ENCODE measurements at regions of chr11 and their contacts with region 1.

Region 1: DNA sequence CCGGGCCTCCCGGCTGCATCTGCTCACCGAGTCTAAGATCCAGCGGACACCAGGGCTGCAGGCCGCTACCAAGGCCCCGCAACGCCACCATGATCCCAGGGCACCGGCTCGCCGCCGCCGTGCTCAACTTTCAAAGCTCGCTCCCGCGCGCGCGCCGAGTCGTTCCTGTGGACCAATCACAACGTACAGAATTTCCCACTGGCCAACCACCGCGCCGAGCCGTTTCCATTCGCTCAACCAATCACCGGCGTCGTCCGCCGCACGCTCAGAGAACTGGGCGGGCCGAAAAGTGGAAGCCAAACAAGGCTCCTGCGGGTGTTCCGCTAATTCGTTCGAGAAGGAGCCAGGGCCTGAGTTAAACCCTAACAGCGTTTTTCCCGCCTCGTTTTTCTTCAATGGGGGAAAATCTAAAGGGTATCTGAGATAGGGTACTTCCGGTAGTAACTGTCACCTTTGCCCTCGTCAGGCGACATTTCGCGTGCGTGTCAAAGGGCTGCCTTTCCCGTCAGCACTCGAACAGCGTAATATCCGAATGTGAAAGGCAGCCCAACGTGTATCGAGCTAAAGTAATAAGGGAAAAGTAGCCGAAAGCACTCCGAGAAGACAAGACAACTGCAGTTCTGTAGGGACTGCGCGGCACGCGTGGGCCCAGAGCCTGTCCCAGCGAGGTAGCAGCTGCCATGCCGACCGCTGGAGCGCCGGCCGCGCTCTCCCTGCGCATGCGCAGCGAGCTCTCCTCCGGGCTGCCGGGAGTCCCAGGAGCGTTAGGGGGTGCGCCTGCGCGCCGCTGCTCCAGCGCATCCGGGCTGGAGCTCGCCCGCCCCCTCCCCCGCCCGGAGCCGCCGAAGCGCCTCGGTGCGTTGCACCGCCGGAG is at the starts of genes NCAPD3 and VPS26B:
- DNase-seq: peak; percentile 95
- ATAC-seq: peak; percentile 82
- H3K4me3 Mint-ChIP-seq: peak within 1 kb of the TSS; percentile 99
- H3K27ac Mint-ChIP-seq: peak within 1 kb of the TSS; percentile 95
- H3K4me1 Mint-ChIP-seq: peaks cover 57% of the 10 kb centered on the region
- H3K27me3 Mint-ChIP-seq: no peaks in the 10 kb centered on the region
- total RNA-seq, gene NCAPD3: 114 to 115 TPM
- total RNA-seq, gene VPS26B: 75.8 to 76.3 TPM

Region 2: GRCh38 chr11:134207538-134208239 is 16.4 kb before region 1 on chr11:
- POLR2A ChIA-PET with region 1: interaction called, 10 read pairs
- DNase-seq: peak; percentile 66
- ATAC-seq: no peak
- H3K4me3 Mint-ChIP-seq: no peak overlapping the region
- H3K27ac Mint-ChIP-seq: no peak overlapping the region
- H3K4me1 Mint-ChIP-seq: peaks cover 3% of the 10 kb centered on the region
- H3K27me3 Mint-ChIP-seq: no peaks in the 10 kb centered on the region

Region 3: GRCh38 chr11:134253188-134253993 is 29.3 kb after region 1 on chr11 and contains the starts of genes ACAD8 and THYN1:
- POLR2A ChIA-PET with region 1: interaction called, 19 read pairs
- DNase-seq: peak; percentile 92
- ATAC-seq: peak; percentile 100
- H3K4me3 Mint-ChIP-seq: peak within 1 kb of the TSS; percentile 90
- H3K27ac Mint-ChIP-seq: peak within 1 kb of the TSS; percentile 85
- H3K4me1 Mint-ChIP-seq: peaks cover 36% of the 10 kb centered on the region
- H3K27me3 Mint-ChIP-seq: no peaks in the 10 kb centered on the region
- total RNA-seq, gene ACAD8: 29.0 to 29.5 TPM
- total RNA-seq, gene THYN1: 65.8 to 66.8 TPM

Region 4: DNA sequence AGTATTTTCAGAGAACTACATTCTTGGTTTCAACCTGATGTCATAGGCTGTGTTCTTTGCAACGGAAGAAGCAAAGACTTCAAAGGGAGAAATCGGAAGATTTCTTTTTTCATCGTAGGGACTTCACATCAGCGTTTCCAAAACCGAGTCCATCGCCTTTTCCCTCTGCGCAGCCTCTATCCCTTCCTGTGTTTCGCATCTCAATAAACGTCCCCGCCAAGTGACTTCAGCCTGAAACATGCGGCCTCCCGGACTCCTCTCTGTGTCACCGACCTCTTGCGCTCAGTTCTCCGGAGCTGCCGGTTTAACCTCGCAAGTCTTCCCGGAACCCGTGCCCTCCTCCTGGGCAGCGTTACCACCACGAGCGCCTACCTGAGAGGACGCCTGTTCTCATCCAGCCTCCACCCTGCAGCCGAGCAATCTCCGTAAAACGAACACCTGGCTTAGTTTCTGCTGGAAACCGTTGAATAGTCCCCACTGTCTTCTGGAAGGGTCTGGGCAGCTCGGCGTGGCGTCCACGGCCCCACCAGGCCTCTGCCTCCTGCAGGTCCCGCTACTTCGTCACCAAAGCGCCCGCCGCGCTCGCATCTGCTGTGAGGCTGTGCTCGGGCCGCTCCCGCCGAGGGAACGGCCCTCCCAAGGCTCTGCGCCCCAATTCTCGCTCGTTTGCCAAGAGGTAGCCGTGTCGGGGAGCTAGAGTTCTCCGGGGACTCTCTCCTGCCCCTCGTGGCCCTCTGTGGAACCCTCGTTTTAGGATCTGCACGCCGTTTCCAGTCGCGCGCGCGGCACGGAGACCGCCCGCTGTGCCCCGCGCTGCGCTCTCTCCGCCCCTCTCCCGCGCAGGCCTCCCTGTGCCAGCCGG is 51.7 kb after region 1 on chr11 and contains the start of gene GLB1L3:
- POLR2A ChIA-PET with region 1: interaction called, 44 read pairs
- DNase-seq: peak; percentile 84
- ATAC-seq: peak; percentile 90
- H3K4me3 Mint-ChIP-seq: peak within 1 kb of the TSS; percentile 87
- H3K27ac Mint-ChIP-seq: peak within 1 kb of the TSS; percentile 90
- H3K4me1 Mint-ChIP-seq: peaks cover 36% of the 10 kb centered on the region
- H3K27me3 Mint-ChIP-seq: peaks cover 5% of the 10 kb centered on the region
- total RNA-seq, gene GLB1L3: 5.2 to 6.1 TPM

Measured in activated naive CD8-positive, alpha-beta T cell treated with anti-CD3 and anti-CD28 coated beads, Interleukin-2, amount 10 ng/mL, durations not matched to agents 7 days and 5 days (primary cell).